ENCODE measurements at regions of chr14 and their contacts with region 1.

Region 1: DNA sequence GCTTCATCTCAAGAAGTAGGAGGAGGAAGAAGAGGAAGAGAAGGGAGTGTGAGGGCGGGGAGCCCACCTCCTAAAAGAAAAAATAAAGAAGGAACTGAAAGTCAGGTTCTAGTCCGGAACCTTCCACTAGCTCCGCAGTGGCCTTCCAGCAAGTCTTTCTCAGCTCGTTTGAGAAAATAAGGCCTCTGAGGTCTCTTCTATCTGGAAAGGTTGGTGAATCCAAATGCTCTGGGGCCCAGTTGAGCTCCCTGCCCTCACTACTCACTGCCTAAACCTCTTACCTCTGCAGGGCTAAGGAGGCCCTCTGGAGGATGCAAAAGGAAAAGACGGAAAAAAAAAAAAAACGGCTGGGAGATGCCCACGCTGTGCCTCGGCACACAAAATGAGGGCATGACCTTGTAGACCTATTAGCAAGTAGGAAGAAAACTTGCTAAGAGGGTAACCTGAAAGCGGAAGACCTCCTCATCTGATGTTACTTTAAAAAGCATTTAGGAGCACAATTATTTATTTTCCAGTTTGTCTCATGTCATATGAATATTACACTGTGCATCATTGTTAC is 35.9 kb downstream of the FBLN5 start:
- DNase-seq: peak in 7 of 9 donors; percentile 39 to 76 (median 64)
- ATAC-seq: peak; percentile 95
- H3K4me3 ChIP-seq: no peak overlapping the region
- H3K4me3 Mint-ChIP-seq: peak overlapping the region in 8 of 10 donors; percentile 3 to 65 (median 32)
- H3K27ac ChIP-seq: no peak overlapping the region
- H3K27ac Mint-ChIP-seq: peak overlapping the region in 7 of 9 donors; percentile 66 to 89 (median 83)
- H3K4me1 ChIP-seq: peaks cover 0 to 9% of the 10 kb centered on the region in 2 donors
- H3K4me1 Mint-ChIP-seq: peaks cover 11 to 27% (median 23%) of the 10 kb centered on the region in 7 donors
- H3K27me3 ChIP-seq: no peaks in the 10 kb centered on the region
- H3K27me3 Mint-ChIP-seq: peaks cover 0 to 2% (median 0%) of the 10 kb centered on the region in 5 donors

Region 2: GRCh38 chr14:91373591-91374254 is 537.8 kb before region 1 on chr14:
- CTCF ChIA-PET with region 1: no interaction called
- POLR2A ChIA-PET with region 1: no interaction called
- intact Hi-C with region 1: no loop called
- DNase-seq: peak in 6 of 9 donors; percentile 42 to 61 (median 56)
- ATAC-seq: peak; percentile 59
- H3K4me3 ChIP-seq: peak overlapping the region; percentile 61
- H3K4me3 Mint-ChIP-seq: peak overlapping the region; percentile 79 to 89 (median 86)
- H3K27ac ChIP-seq: peak overlapping the region; percentile 72
- H3K27ac Mint-ChIP-seq: peak overlapping the region; percentile 89 to 99 (median 97)
- H3K4me1 ChIP-seq: peaks cover 94 to 98% of the 10 kb centered on the region in 2 donors
- H3K4me1 Mint-ChIP-seq: peaks cover 84 to 100% (median 98%) of the 10 kb centered on the region in 7 donors
- H3K27me3 ChIP-seq: no peaks in the 10 kb centered on the region
- H3K27me3 Mint-ChIP-seq: no peaks in the 10 kb centered on the region

Region 3: GRCh38 chr14:91482263-91483013 is 429.1 kb before region 1 on chr14:
- CTCF ChIA-PET with region 1: no interaction called
- POLR2A ChIA-PET with region 1: no interaction called
- intact Hi-C with region 1: loop called in 1 of 2 experiments (anchors 5 kb)
- DNase-seq: no peak
- ATAC-seq: peak; percentile 12
- H3K4me3 ChIP-seq: no peak overlapping the region
- H3K4me3 Mint-ChIP-seq: peak overlapping the region in 1 of 10 donors; percentile 8
- H3K27ac ChIP-seq: peak overlapping the region; percentile 14
- H3K27ac Mint-ChIP-seq: peak overlapping the region in 7 of 9 donors; percentile 34 to 76 (median 45)
- H3K4me1 ChIP-seq: peaks cover 4 to 10% of the 10 kb centered on the region in 2 donors
- H3K4me1 Mint-ChIP-seq: peaks cover 34 to 87% (median 82%) of the 10 kb centered on the region in 7 donors
- H3K27me3 ChIP-seq: no peaks in the 10 kb centered on the region
- H3K27me3 Mint-ChIP-seq: no peaks in the 10 kb centered on the region

Region 4: DNA sequence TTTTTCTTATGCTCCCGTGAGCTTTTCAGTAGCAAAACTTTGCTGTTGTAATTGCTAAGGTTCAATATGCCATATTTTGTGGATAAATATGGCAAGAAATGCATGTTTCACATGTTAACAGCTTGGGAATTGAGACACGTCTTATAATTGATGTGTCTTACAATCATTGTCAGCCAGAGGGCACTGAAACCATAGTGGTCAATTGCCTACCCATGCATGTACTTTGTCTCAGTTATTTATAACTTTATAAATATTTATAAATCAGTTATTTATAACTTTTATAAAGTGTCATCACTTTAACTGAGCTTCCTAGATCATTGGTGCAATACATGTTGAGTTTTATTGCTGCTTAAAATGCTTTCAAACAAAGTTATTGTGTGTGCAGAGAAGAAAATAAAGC is 261.6 kb before region 1 on chr14:
- CTCF ChIA-PET with region 1: interaction called, 14 read pairs
- POLR2A ChIA-PET with region 1: no interaction called
- intact Hi-C with region 1: loop called in 1 of 2 experiments (anchors 1 kb)
- DNase-seq: peak in 7 of 9 donors; percentile 5 to 59 (median 24)
- ATAC-seq: no peak
- H3K4me3 ChIP-seq: no peak overlapping the region
- H3K4me3 Mint-ChIP-seq: no peak overlapping the region
- H3K27ac ChIP-seq: no peak overlapping the region
- H3K27ac Mint-ChIP-seq: no peak overlapping the region
- H3K4me1 ChIP-seq: no peaks in the 10 kb centered on the region
- H3K4me1 Mint-ChIP-seq: peaks cover 0 to 19% (median 5%) of the 10 kb centered on the region in 7 donors
- H3K27me3 ChIP-seq: no peaks in the 10 kb centered on the region
- H3K27me3 Mint-ChIP-seq: peaks cover 0 to 6% (median 4%) of the 10 kb centered on the region in 5 donors

Region 5: DNA sequence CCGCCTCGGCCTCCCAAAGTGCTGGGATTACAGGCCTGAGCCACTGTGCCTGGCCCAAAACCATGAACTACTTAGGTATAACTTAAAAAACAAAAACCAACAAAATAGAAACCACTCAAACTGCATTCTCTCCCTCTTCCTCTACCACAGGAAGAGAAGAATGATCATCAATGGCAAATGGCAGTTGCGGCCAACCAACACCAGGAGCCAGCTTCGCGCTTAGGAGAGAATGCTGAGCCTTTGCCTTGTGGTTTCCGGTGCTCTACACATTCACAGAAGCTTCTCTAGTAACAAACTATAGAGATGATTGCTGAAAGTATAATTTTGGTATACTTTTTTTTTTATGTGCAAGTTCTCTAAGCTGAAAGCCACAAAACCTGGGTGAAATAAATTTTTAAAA is 196.7 kb before region 1 on chr14:
- CTCF ChIA-PET with region 1: interaction called, 6 read pairs
- POLR2A ChIA-PET with region 1: no interaction called
- intact Hi-C with region 1: loop called (anchors 1 to 10 kb)
- DNase-seq: peak in 8 of 9 donors; percentile 25 to 69 (median 55)
- ATAC-seq: peak; percentile 80
- H3K4me3 ChIP-seq: no peak overlapping the region
- H3K4me3 Mint-ChIP-seq: peak overlapping the region in 7 of 10 donors; percentile 33 to 71 (median 62)
- H3K27ac ChIP-seq: no peak overlapping the region
- H3K27ac Mint-ChIP-seq: peak overlapping the region in 7 of 9 donors; percentile 43 to 88 (median 74)
- H3K4me1 ChIP-seq: peaks cover 0 to 4% of the 10 kb centered on the region in 2 donors
- H3K4me1 Mint-ChIP-seq: peaks cover 3 to 20% (median 10%) of the 10 kb centered on the region in 7 donors
- H3K27me3 ChIP-seq: no peaks in the 10 kb centered on the region
- H3K27me3 Mint-ChIP-seq: peaks cover 0 to 3% (median 0%) of the 10 kb centered on the region in 5 donors

Region 6: GRCh38 chr14:91780452-91780851 is 131.1 kb before region 1 on chr14:
- CTCF ChIA-PET with region 1: interaction called, 3 read pairs
- POLR2A ChIA-PET with region 1: interaction called, 4 read pairs
- intact Hi-C with region 1: loop called in 1 of 2 experiments (anchors 5 kb)
- DNase-seq: no peak
- ATAC-seq: no peak
- H3K4me3 ChIP-seq: no peak overlapping the region
- H3K4me3 Mint-ChIP-seq: no peak overlapping the region
- H3K27ac ChIP-seq: no peak overlapping the region
- H3K27ac Mint-ChIP-seq: peak overlapping the region in 1 of 9 donors; percentile 27
- H3K4me1 ChIP-seq: no peaks in the 10 kb centered on the region
- H3K4me1 Mint-ChIP-seq: peaks cover 4 to 22% (median 10%) of the 10 kb centered on the region in 7 donors
- H3K27me3 ChIP-seq: no peaks in the 10 kb centered on the region
- H3K27me3 Mint-ChIP-seq: no peaks in the 10 kb centered on the region

Measured in naive thymus-derived CD4-positive, alpha-beta T cell (primary cell).